ENCODE measurements at regions of chr12 and their contacts with region 1.

Region 1: GRCh38 chr12:110937104-110937641 is 16.8 kb upstream of the MYL2 start:
- DNase-seq: peak; percentile 53
- ATAC-seq: peak; percentile 34
- H3K4me3 Mint-ChIP-seq: no peak overlapping the region
- H3K27ac Mint-ChIP-seq: no peak overlapping the region
- H3K4me1 Mint-ChIP-seq: peaks cover 6% of the 10 kb centered on the region
- H3K27me3 Mint-ChIP-seq: peaks cover 20% of the 10 kb centered on the region
- CTCF ChIP-seq: peak; percentile 95

Region 2: GRCh38 chr12:110528277-110528839 is 408.8 kb before region 1 on chr12:
- CTCF ChIA-PET with region 1: no interaction called
- POLR2A ChIA-PET with region 1: no interaction called
- intact Hi-C with region 1: no loop called
- DNase-seq: no peak
- ATAC-seq: no peak
- H3K4me3 Mint-ChIP-seq: no peak overlapping the region
- H3K27ac Mint-ChIP-seq: no peak overlapping the region
- H3K4me1 Mint-ChIP-seq: peaks cover 20% of the 10 kb centered on the region
- H3K27me3 Mint-ChIP-seq: no peaks in the 10 kb centered on the region
- CTCF ChIP-seq: no peak

Region 3: DNA sequence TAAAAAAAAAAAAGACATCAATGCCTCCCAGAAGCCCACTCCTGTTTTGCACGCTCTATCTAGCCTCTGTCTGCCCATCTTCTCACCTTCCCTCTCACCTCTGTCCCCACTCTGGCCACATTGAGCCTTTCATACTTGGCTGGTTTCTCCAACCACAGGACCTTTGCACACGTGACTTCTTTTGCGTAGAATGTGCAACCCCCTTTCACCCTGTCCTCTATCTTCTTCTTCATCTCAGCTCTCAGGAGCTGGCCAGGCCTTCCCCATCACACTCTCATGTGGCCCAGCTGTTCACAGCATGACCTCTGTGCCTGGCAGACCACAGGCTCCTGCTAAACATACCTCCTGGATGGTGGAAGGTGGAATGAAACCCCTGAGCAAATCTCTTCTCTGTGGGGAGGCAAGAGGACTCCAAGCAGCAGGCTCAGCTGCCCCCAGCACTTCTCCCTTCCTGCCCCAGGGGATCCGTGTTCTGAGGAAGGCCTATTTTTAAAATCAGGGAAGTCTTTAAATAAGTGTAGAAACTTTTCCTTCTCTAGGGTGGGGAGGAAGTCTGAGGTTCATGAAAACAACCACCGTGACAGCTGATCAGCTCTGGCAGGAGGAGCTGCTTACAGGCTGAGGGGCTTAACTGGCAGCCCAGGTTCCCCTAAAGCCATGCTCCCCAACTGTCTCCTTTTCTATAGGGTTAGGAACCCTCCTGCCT is 259.8 kb before region 1 on chr12:
- CTCF ChIA-PET with region 1: no interaction called
- POLR2A ChIA-PET with region 1: no interaction called
- intact Hi-C with region 1: no loop called
- DNase-seq: peak; percentile 50
- ATAC-seq: peak; percentile 64
- H3K4me3 Mint-ChIP-seq: peak overlapping the region; percentile 78
- H3K27ac Mint-ChIP-seq: peak overlapping the region; percentile 90
- H3K4me1 Mint-ChIP-seq: peaks cover 96% of the 10 kb centered on the region
- H3K27me3 Mint-ChIP-seq: no peaks in the 10 kb centered on the region
- CTCF ChIP-seq: no peak

Region 4: GRCh38 chr12:110766311-110767154 is 170.6 kb before region 1 on chr12:
- CTCF ChIA-PET with region 1: no interaction called
- POLR2A ChIA-PET with region 1: no interaction called
- intact Hi-C with region 1: no loop called
- DNase-seq: no peak
- ATAC-seq: no peak
- H3K4me3 Mint-ChIP-seq: no peak overlapping the region
- H3K27ac Mint-ChIP-seq: no peak overlapping the region
- H3K4me1 Mint-ChIP-seq: no peaks in the 10 kb centered on the region
- H3K27me3 Mint-ChIP-seq: peaks cover 2% of the 10 kb centered on the region
- CTCF ChIP-seq: no peak

Region 5: DNA sequence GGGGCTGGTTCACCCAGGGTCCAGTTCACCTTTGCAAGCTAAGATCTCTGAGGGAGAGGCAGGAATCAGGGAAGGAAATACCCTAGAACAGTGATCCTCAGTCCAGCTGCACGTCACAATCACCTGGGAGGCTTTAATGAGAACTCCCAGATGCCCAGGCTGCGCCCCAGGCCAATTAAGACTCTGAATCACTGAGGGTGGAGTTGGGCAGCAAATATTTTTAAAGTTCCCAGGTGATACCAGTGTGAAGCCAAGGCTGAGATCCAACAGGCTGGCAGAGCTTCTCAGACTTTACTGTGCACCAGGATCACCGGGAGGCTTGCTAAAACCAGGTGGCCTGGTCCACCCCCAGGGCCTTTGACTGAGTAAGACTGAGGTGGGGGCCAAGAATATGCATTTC is 40.6 kb before region 1 on chr12:
- CTCF ChIA-PET with region 1: interaction called, 3 read pairs
- POLR2A ChIA-PET with region 1: no interaction called
- intact Hi-C with region 1: loop called (anchors 2 kb)
- DNase-seq: no peak
- ATAC-seq: no peak
- H3K4me3 Mint-ChIP-seq: no peak overlapping the region
- H3K27ac Mint-ChIP-seq: no peak overlapping the region
- H3K4me1 Mint-ChIP-seq: peaks cover 6% of the 10 kb centered on the region
- H3K27me3 Mint-ChIP-seq: no peaks in the 10 kb centered on the region
- CTCF ChIP-seq: no peak

Region 6: DNA sequence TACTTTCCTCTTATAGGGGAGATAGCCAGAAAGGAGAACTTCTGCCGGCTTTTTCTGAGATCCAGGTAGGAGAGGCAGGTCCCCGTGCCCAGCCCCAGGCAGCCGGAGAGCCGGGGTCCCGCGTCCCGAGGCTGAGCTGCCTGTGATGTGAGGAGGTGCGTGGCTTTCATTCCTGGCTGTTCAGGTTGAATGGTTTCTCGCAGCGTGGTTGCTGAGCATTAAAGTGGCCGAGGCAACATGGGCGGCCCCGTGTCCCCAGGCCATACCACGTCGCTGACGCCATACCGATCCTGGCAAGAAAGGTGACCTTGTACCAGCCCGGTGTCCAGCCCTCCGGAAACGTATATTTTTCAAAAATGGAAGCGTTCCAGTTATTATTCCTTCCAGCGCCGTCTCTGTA is 99.9 kb after region 1 on chr12:
- CTCF ChIA-PET with region 1: no interaction called
- POLR2A ChIA-PET with region 1: no interaction called
- intact Hi-C with region 1: no loop called
- DNase-seq: no peak
- ATAC-seq: no peak
- H3K4me3 Mint-ChIP-seq: peak overlapping the region; percentile 38
- H3K27ac Mint-ChIP-seq: no peak overlapping the region
- H3K4me1 Mint-ChIP-seq: peaks cover 26% of the 10 kb centered on the region
- H3K27me3 Mint-ChIP-seq: peaks cover 59% of the 10 kb centered on the region
- CTCF ChIP-seq: no peak

Region 7: GRCh38 chr12:111298582-111299436 is 361.6 kb after region 1 on chr12:
- CTCF ChIA-PET with region 1: interaction called, 4 read pairs
- POLR2A ChIA-PET with region 1: no interaction called
- intact Hi-C with region 1: loop called (anchors 1 kb)
- DNase-seq: peak; percentile 43
- ATAC-seq: peak; percentile 54
- H3K4me3 Mint-ChIP-seq: no peak overlapping the region
- H3K27ac Mint-ChIP-seq: no peak overlapping the region
- H3K4me1 Mint-ChIP-seq: no peaks in the 10 kb centered on the region
- H3K27me3 Mint-ChIP-seq: peaks cover 2% of the 10 kb centered on the region
- CTCF ChIP-seq: no peak

Region 8: DNA sequence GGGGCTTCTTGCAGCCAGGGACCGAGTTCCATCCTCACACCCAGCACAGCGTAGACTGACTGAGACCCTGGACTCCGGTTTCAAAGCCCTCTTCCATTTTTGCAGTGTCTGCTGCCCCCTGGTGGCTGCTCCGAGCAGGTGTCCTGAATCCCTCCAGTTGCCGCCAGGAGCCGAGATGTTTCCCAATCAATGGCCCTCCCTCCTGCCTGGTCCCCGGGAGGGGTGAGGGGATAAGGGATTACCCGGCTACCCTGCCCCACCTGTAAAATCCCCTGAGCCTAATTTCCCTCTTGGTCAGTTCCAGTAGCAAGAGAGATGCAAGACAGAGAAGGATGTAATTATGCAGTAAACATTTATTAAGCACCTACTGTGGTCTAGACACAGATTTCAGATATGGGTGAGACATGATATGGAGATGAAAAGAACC is 376.7 kb after region 1 on chr12:
- CTCF ChIA-PET with region 1: interaction called, 4 read pairs
- POLR2A ChIA-PET with region 1: no interaction called
- intact Hi-C with region 1: loop called (anchors 1 kb)
- DNase-seq: peak; percentile 65
- ATAC-seq: peak; percentile 71
- H3K4me3 Mint-ChIP-seq: no peak overlapping the region
- H3K27ac Mint-ChIP-seq: no peak overlapping the region
- H3K4me1 Mint-ChIP-seq: peaks cover 7% of the 10 kb centered on the region
- H3K27me3 Mint-ChIP-seq: peaks cover 12% of the 10 kb centered on the region
- CTCF ChIP-seq: peak; percentile 57

Region 9: DNA sequence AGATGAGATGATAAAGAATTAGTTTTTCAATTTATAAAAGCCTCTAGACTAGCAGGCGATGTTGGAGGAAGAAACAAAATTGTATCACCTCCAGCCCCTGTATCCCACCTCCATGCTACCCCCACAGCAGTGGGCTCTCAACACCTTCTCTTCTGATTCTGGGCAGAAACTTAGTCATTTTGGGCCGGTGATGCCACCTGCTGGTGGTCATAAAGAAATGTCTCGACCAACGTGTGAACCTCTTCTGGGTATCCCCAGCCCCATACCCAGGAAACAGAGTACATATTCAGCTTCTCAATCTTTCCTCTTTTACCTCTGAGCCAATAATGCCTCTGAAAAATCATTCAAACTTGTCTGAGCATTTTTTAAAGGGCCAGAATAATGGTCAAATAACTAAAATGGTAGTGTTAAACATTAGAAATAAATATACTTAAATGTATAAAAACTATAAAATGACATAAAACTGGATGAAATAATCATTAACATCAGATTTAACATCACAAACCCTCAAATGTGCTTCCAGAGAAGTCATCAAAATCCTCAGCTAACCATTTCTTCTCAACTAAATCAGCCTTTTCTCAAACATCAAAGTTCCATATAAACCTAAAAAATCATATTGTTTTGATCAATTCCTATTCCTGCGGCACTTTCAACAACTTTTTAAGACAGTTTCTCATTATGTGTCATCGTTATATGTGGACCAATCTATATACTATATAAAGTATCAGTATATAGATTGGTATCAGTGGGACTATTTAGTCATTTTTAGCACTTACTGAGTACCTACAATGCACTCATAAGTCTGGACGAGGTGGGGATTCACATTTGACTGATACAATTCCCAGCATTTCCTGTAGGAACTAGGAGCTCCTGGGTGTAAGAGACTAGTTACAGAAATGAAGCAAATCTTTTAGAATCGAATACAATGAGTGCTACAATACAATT is 592.5 kb after region 1 on chr12:
- CTCF ChIA-PET with region 1: no interaction called
- POLR2A ChIA-PET with region 1: no interaction called
- intact Hi-C with region 1: loop called (anchors 5 kb)
- DNase-seq: peak; percentile 41
- ATAC-seq: peak; percentile 86
- H3K4me3 Mint-ChIP-seq: no peak overlapping the region
- H3K27ac Mint-ChIP-seq: no peak overlapping the region
- H3K4me1 Mint-ChIP-seq: no peaks in the 10 kb centered on the region
- H3K27me3 Mint-ChIP-seq: no peaks in the 10 kb centered on the region
- CTCF ChIP-seq: no peak

Region 10: DNA sequence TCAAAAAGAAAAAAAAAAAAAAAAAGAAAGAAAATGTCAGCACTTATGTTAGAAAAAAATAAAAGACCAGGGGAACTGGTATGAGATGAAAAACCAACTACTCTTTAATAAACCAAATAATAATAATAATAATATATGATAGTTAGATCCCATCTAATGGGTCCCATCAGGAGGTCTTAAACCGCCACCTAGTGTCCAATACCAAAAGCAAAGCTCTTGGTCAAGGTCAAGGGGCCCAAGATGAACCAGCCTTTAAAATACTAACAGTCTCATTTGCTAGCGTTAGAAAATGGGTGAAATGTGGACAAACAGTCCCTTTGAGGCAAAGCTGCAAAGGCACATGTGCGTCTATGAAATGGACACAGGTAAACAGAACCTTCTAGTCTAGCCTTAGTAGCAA is 736.3 kb after region 1 on chr12:
- CTCF ChIA-PET with region 1: no interaction called
- POLR2A ChIA-PET with region 1: no interaction called
- intact Hi-C with region 1: loop called (anchors 5 kb)
- DNase-seq: no peak
- ATAC-seq: no peak
- H3K4me3 Mint-ChIP-seq: no peak overlapping the region
- H3K27ac Mint-ChIP-seq: no peak overlapping the region
- H3K4me1 Mint-ChIP-seq: no peaks in the 10 kb centered on the region
- H3K27me3 Mint-ChIP-seq: no peaks in the 10 kb centered on the region
- CTCF ChIP-seq: no peak

Measured in activated B cell treated with CpG ODN at 0.5 μM for 24 hours (primary cell).